Left ventricle myocardium superior (tissue), 1 donor: ENCODE measurements at regions of chr1 and their contacts with region 1.

Region 1: GRCh38 chr1:235336903-235337302 is 8.5 kb downstream of the GGPS1 start:
- DNase-seq: no peak
- ATAC-seq: peak; percentile 96

Region 2: GRCh38 chr1:235253219-235253962 is 83.5 kb before region 1 on chr1:
- intact Hi-C with region 1: loop called (anchors 10 kb)
- DNase-seq: peak; percentile 34
- ATAC-seq: peak; percentile 91